Activated B cell treated with CpG ODN at 0.5 μM for 24 hours (primary cell): ENCODE measurements at regions of chr7 and their contacts with region 1.

Region 1: GRCh38 chr7:18570890-18571478 is 75.4 kb downstream of the HDAC9 start:
- DNase-seq: no peak
- ATAC-seq: no peak
- H3K4me3 Mint-ChIP-seq: no peak overlapping the region
- H3K27ac Mint-ChIP-seq: peak overlapping the region; percentile 50
- H3K4me1 Mint-ChIP-seq: peaks cover 71% of the 10 kb centered on the region
- H3K27me3 Mint-ChIP-seq: no peaks in the 10 kb centered on the region
- CTCF ChIP-seq: no peak

Region 2: GRCh38 chr7:18508443-18509427 is 62.2 kb before region 1 on chr7:
- CTCF ChIA-PET with region 1: interaction called, 24 read pairs
- POLR2A ChIA-PET with region 1: interaction called, 13 read pairs
- intact Hi-C with region 1: loop called (anchors 1 kb)
- DNase-seq: no peak
- ATAC-seq: peak; percentile 74
- H3K4me3 Mint-ChIP-seq: peak overlapping the region; percentile 82
- H3K27ac Mint-ChIP-seq: peak overlapping the region; percentile 99
- H3K4me1 Mint-ChIP-seq: peaks cover 89% of the 10 kb centered on the region
- H3K27me3 Mint-ChIP-seq: no peaks in the 10 kb centered on the region
- CTCF ChIP-seq: no peak

Region 3: GRCh38 chr7:18530224-18531179 is 40.5 kb before region 1 on chr7:
- CTCF ChIA-PET with region 1: interaction called, 6 read pairs
- POLR2A ChIA-PET with region 1: interaction called, 13 read pairs
- intact Hi-C with region 1: loop called (anchors 1 kb)
- DNase-seq: no peak
- ATAC-seq: peak; percentile 81
- H3K4me3 Mint-ChIP-seq: peak overlapping the region; percentile 72
- H3K27ac Mint-ChIP-seq: peak overlapping the region; percentile 90
- H3K4me1 Mint-ChIP-seq: peaks cover 86% of the 10 kb centered on the region
- H3K27me3 Mint-ChIP-seq: no peaks in the 10 kb centered on the region
- CTCF ChIP-seq: no peak

Region 4: GRCh38 chr7:18552943-18553584 is 17.9 kb before region 1 on chr7:
- CTCF ChIA-PET with region 1: interaction called, 4 read pairs
- POLR2A ChIA-PET with region 1: interaction called, 9 read pairs
- intact Hi-C with region 1: loop called (anchors 2 kb)
- DNase-seq: no peak
- ATAC-seq: peak; percentile 77
- H3K4me3 Mint-ChIP-seq: peak overlapping the region; percentile 57
- H3K27ac Mint-ChIP-seq: peak overlapping the region; percentile 80
- H3K4me1 Mint-ChIP-seq: peaks cover 61% of the 10 kb centered on the region
- H3K27me3 Mint-ChIP-seq: no peaks in the 10 kb centered on the region
- CTCF ChIP-seq: no peak